Activated CD8-positive, alpha-beta T cell treated with anti-CD3 and anti-CD28 coated beads, Interleukin-2, amount 10 ng/mL, durations not matched to agents 7 days and 5 days (primary cell): ENCODE measurements at regions of chr12 and their contacts with region 1.

Region 1: DNA sequence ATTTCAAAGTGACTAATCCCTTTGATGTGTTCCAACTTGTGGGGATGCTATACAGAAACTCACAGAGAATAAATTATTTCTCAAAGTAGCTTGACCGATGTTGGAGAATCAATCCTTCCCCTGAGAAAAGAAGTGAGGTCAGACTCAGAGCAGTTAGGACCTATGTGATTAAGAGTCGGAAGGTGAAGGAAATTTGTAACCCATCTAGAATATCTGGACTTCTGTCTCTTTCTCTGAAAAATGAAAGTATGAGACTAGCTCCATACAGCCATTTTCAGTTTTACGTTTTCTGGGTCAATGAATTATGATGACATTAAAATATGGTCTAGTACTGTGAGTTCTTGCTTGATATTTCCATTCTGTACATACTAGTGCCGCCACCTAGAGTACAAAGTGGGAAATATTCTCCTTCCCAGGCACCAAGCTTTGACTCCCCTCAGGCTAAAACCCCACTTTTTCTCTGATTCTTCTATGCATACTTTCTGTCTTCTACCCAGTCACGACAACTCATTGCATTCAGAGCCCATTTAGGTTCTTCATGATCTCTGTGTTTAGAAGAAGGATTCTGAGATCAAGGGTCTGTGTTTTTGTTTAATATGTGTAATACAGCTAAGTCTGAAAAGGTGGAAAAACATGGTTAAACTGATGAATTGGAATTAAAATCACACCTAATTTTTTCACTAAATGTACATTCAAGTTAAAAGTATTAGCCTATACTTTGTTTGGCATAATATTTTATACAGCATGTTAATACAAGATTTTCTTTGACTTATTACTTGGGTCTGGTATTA is 6.9 kb upstream of the NTS start:
- DNase-seq: peak; percentile 34
- ATAC-seq: peak; percentile 69
- H3K4me3 Mint-ChIP-seq: no peak overlapping the region
- H3K27ac Mint-ChIP-seq: no peak overlapping the region
- H3K4me1 Mint-ChIP-seq: no peaks in the 10 kb centered on the region
- H3K27me3 Mint-ChIP-seq: no peaks in the 10 kb centered on the region

Region 2: DNA sequence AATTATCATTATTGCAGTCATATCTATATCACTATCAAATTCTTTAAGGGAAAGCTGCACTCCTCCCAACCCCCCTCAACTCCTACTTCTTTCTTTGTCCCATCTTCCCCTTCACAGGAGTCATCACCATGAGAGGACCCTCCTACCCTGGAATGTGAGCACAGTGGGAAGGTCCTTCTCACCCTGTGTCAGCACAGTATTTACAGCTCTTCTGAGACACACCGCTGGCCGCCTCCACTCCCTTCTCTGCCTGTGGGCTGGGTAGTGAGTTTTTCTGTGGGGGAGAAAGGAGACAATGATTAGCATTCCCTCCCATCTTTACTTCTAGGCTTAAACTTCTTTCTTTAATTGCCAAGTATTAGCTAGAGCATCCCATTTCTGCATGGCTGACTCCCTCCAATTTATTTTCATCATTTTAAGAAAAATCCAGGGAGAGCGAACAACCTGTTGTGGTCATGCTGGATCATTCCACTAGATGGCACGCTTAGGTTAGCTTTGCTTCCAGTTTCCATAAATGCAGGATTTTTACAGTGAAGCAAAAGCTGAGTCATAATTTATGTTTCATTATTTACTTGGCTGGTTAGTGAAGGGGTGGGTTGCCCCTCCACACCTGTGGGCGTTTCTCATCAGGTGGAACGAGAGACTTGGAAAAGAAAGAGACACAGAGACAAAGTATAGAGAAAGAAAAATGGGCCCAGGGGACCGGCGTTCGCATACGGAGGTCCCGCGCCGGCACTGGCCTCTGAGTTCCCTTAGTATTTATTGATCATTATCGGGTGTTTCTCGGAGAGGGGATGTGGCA is 398.6 kb before region 1 on chr12:
- CTCF ChIA-PET with region 1: interaction called, 16 read pairs
- POLR2A ChIA-PET with region 1: no interaction called
- DNase-seq: peak; percentile 48
- ATAC-seq: peak; percentile 57
- H3K4me3 Mint-ChIP-seq: peak overlapping the region; percentile 71
- H3K27ac Mint-ChIP-seq: peak overlapping the region; percentile 4
- H3K4me1 Mint-ChIP-seq: peaks cover 18% of the 10 kb centered on the region
- H3K27me3 Mint-ChIP-seq: peaks cover 6% of the 10 kb centered on the region

Region 3: DNA sequence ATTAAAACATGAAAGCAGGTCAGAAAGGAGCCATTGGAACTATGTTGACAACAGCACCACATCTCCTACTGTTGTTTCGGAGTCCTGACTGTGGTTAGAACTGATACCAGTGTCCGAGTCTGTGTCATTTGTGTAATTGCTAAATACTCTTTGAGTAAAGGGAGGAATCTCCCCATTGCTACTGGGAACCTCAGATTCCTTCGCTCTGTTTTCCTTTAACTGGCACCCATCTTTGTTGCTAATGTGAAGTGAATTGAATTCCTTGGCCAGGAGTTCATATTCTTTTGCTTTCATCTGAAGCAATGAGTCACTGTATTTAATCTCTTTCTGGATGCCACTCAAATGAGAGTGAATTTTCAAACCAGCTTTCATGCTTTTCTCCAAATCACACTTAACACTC is 62.5 kb before region 1 on chr12:
- CTCF ChIA-PET with region 1: no interaction called
- POLR2A ChIA-PET with region 1: no interaction called
- DNase-seq: no peak
- ATAC-seq: no peak
- H3K4me3 Mint-ChIP-seq: no peak overlapping the region
- H3K27ac Mint-ChIP-seq: no peak overlapping the region
- H3K4me1 Mint-ChIP-seq: no peaks in the 10 kb centered on the region
- H3K27me3 Mint-ChIP-seq: no peaks in the 10 kb centered on the region

Region 4: GRCh38 chr12:85834378-85834777 is 32.8 kb before region 1 on chr12:
- CTCF ChIA-PET with region 1: no interaction called
- POLR2A ChIA-PET with region 1: no interaction called
- DNase-seq: no peak
- ATAC-seq: no peak
- H3K4me3 Mint-ChIP-seq: no peak overlapping the region
- H3K27ac Mint-ChIP-seq: no peak overlapping the region
- H3K4me1 Mint-ChIP-seq: no peaks in the 10 kb centered on the region
- H3K27me3 Mint-ChIP-seq: no peaks in the 10 kb centered on the region

Region 5: GRCh38 chr12:86044396-86044795 is 177.2 kb after region 1 on chr12:
- CTCF ChIA-PET with region 1: no interaction called
- POLR2A ChIA-PET with region 1: no interaction called
- DNase-seq: no peak
- ATAC-seq: no peak
- H3K4me3 Mint-ChIP-seq: no peak overlapping the region
- H3K27ac Mint-ChIP-seq: no peak overlapping the region
- H3K4me1 Mint-ChIP-seq: no peaks in the 10 kb centered on the region
- H3K27me3 Mint-ChIP-seq: no peaks in the 10 kb centered on the region